Aorta (tissue), 5 donors: ENCODE measurements at regions of chr1 and their contacts with region 1.

Region 1: GRCh38 chr1:17494114-17494729 is 45.3 kb upstream of the ARHGEF10L start:
- DNase-seq: peak; percentile 73 to 93
- ATAC-seq: peak; percentile 76
- H3K4me3 ChIP-seq: no peak overlapping the region
- H3K27ac ChIP-seq: no peak overlapping the region
- H3K4me1 ChIP-seq: no peaks in the 10 kb centered on the region
- H3K27me3 ChIP-seq: no peaks in the 10 kb centered on the region

Region 2: DNA sequence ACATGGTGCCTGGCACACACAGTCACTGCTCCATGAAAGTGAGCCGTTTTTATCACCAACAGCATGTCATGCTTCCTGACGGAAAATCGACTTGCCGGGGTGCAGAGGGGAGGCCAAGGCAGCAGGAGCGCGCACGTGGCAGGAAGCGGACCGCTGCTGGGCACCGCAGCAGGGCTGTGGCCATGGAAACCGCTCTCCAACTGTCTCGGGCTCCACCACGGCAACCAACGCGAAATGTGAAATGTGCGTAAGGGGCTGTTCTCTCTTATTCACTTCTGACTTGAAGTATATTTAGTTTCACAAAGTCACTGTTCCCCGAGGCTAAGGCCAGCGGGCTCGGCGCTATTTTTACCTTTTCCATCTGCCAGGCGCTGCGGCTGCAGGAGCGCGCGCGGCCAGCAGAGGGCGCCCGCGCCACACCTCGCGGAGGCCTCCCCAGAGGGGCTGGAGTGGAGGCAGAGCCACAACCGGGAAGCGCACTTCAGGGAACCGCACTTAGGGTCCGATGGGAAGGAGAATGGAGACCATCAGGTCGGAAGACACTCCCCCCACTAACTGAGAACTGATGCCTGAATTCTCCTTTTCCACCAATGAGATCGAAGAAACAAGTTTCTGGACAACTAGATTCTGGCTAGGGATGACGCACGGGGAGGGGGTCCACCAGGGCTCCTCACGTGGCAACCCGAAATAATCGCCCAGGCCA is 74.4 kb before region 1 on chr1:
- intact Hi-C with region 1: loop called in 1 of 2 experiments (anchors 5 kb)
- DNase-seq: peak; percentile 73 to 91
- ATAC-seq: peak; percentile 91
- H3K4me3 ChIP-seq: no peak overlapping the region
- H3K27ac ChIP-seq: no peak overlapping the region
- H3K4me1 ChIP-seq: no peaks in the 10 kb centered on the region
- H3K27me3 ChIP-seq: no peaks in the 10 kb centered on the region

Region 3: GRCh38 chr1:17475729-17476128 is 18.5 kb before region 1 on chr1:
- intact Hi-C with region 1: no loop called
- DNase-seq: no peak
- ATAC-seq: no peak
- H3K4me3 ChIP-seq: no peak overlapping the region
- H3K27ac ChIP-seq: no peak overlapping the region
- H3K4me1 ChIP-seq: no peaks in the 10 kb centered on the region
- H3K27me3 ChIP-seq: peaks cover 0 to 2% of the 10 kb centered on the region in 2 donors

Region 4: GRCh38 chr1:17696417-17697301 is 202.4 kb after region 1 on chr1:
- intact Hi-C with region 1: no loop called
- DNase-seq: no peak
- ATAC-seq: no peak
- H3K4me3 ChIP-seq: no peak overlapping the region
- H3K27ac ChIP-seq: no peak overlapping the region
- H3K4me1 ChIP-seq: no peaks in the 10 kb centered on the region
- H3K27me3 ChIP-seq: no peaks in the 10 kb centered on the region

Region 5: DNA sequence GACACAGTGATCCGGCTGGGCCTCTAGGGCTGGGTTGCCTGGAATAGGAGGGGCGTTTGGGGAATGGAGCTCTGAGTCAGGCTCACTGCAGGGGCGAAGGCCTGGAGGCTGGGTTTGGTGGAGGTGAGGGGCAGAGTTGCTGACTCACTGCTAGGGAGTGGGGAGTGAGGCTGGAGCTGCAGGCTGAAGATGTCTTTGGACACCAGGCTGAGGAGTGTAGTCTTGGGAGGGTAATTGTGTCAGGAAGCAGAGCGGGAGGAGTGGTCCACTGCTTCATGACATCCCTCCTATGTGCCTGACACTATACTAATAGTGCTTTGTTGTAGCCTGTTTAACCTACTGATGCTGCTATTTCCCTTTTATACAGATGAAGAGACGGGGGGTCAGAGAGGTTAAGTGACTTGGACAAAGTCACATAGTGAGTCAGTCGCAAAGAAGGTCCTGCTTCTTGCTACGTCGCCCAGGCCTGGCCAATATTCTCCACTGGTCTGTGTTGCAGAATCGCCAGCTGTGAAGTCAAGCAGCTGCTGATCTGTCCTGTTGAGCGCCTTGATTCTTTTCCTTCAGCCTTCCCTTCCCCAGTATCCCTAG is 274.5 kb after region 1 on chr1:
- intact Hi-C with region 1: no loop called
- DNase-seq: peak; percentile 76 to 84
- ATAC-seq: peak; percentile 55
- H3K4me3 ChIP-seq: no peak overlapping the region
- H3K27ac ChIP-seq: no peak overlapping the region
- H3K4me1 ChIP-seq: no peaks in the 10 kb centered on the region
- H3K27me3 ChIP-seq: no peaks in the 10 kb centered on the region

Region 6: DNA sequence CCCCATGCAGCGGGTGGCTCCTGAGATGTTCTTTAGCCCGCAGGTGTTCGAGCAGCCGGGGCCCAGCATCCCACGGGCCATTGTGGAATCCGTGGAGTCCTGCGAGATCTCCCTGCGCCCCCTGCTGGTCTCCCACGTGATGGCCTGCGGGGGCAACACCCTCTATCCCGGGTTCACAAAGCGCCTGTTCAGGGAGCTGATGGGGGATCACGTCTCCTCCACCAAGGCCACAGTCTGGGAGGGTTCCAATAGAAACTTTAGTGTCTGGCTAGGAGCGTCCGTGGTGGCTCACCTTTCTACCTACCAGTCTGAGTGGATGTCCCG is 331.9 kb after region 1 on chr1:
- intact Hi-C with region 1: loop called (anchors 2 to 5 kb)
- DNase-seq: peak; percentile 65 to 87
- ATAC-seq: no peak
- H3K4me3 ChIP-seq: no peak overlapping the region
- H3K27ac ChIP-seq: no peak overlapping the region
- H3K4me1 ChIP-seq: no peaks in the 10 kb centered on the region
- H3K27me3 ChIP-seq: no peaks in the 10 kb centered on the region

Region 7: GRCh38 chr1:17909634-17910033 is 415.4 kb after region 1 on chr1:
- intact Hi-C with region 1: loop called in 1 of 2 experiments (anchors 2 kb)
- DNase-seq: no peak
- ATAC-seq: no peak
- H3K4me3 ChIP-seq: no peak overlapping the region
- H3K27ac ChIP-seq: no peak overlapping the region
- H3K4me1 ChIP-seq: no peaks in the 10 kb centered on the region
- H3K27me3 ChIP-seq: no peaks in the 10 kb centered on the region

Region 8: DNA sequence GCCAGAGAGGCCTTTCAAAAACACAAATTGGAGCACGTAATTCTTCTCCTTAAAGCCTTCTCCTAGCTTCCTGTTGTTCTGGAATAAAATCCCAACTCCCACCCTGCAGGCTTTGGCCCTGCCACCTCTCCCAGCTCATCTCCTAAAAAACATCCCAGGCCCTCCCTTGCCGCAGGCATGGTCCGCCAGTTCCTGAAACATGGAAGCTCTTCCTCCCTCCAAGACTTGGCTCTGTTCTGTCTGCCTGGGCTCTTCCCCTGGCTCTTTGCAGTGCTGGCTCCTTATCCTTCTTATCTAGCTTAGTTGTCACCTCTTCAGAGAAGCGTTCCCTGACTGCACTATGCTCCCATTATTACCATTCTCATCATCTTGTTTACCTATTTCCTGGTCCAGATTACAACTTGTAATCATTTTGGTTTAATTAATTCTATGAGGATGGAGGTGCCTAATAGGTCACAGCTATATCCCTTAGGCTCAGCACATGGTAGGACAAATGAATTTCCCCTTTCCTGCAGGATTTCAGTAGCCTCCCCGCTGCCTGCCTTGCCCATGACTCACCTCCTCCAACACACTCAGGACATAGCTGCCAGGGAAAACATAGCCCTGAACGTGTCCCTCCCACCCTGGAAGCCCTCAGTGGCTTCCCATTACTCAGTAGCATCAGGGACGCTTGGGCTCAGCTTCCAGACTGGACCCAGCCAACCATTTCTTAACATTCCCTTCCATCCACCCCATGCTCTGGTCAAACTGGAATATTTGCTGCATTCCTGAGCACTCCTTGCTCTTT is 597.6 kb after region 1 on chr1:
- intact Hi-C with region 1: loop called in 1 of 2 experiments (anchors 10 kb)
- DNase-seq: peak; percentile 74 to 84
- ATAC-seq: peak; percentile 71
- H3K4me3 ChIP-seq: no peak overlapping the region
- H3K27ac ChIP-seq: no peak overlapping the region
- H3K4me1 ChIP-seq: peaks cover 0 to 3% of the 10 kb centered on the region in 2 donors
- H3K27me3 ChIP-seq: no peaks in the 10 kb centered on the region

Region 9: GRCh38 chr1:18100491-18101063 is 606.4 kb after region 1 on chr1:
- intact Hi-C with region 1: loop called (anchors 5 to 10 kb)
- DNase-seq: peak in 1 of 2 donors; percentile 78
- ATAC-seq: peak; percentile 82
- H3K4me3 ChIP-seq: no peak overlapping the region
- H3K27ac ChIP-seq: no peak overlapping the region
- H3K4me1 ChIP-seq: no peaks in the 10 kb centered on the region
- H3K27me3 ChIP-seq: no peaks in the 10 kb centered on the region